Activated CD4-positive, alpha-beta T cell treated with anti-CD3 and anti-CD28 coated beads for 36 hours (primary cell): ENCODE measurements at regions of chr3 and their contacts with region 1.

Region 1: GRCh38 chr3:195909644-195910508 is 1.5 kb upstream of the TNK2 start:
- DNase-seq: peak; percentile 94
- ATAC-seq: peak; percentile 67
- H3K4me3 Mint-ChIP-seq: peak overlapping the region; percentile 68
- H3K27ac Mint-ChIP-seq: peak overlapping the region; percentile 65
- H3K4me1 Mint-ChIP-seq: peaks cover 38% of the 10 kb centered on the region
- H3K27me3 Mint-ChIP-seq: no peaks in the 10 kb centered on the region

Region 2: GRCh38 chr3:195442573-195443390 is 467.1 kb before region 1 on chr3 and contains the start of gene ACAP2:
- CTCF ChIA-PET with region 1: no interaction called
- POLR2A ChIA-PET with region 1: no interaction called
- intact Hi-C with region 1: loop called in 1 of 2 experiments (anchors 2 kb)
- DNase-seq: peak; percentile 99
- ATAC-seq: peak; percentile 96
- H3K4me3 Mint-ChIP-seq: peak within 1 kb of the TSS; percentile 96
- H3K27ac Mint-ChIP-seq: peak within 1 kb of the TSS; percentile 91
- H3K4me1 Mint-ChIP-seq: peaks cover 44% of the 10 kb centered on the region
- H3K27me3 Mint-ChIP-seq: no peaks in the 10 kb centered on the region
- total RNA-seq, gene ACAP2: 43.7 to 51.9 TPM

Region 3: GRCh38 chr3:195863121-195864006 is 46.5 kb before region 1 on chr3:
- CTCF ChIA-PET with region 1: interaction called, 74 read pairs
- POLR2A ChIA-PET with region 1: no interaction called
- intact Hi-C with region 1: loop called (anchors 1 kb)
- DNase-seq: peak; percentile 88
- ATAC-seq: peak; percentile 88
- H3K4me3 Mint-ChIP-seq: no peak overlapping the region
- H3K27ac Mint-ChIP-seq: no peak overlapping the region
- H3K4me1 Mint-ChIP-seq: peaks cover 10% of the 10 kb centered on the region
- H3K27me3 Mint-ChIP-seq: no peaks in the 10 kb centered on the region

Region 4: DNA sequence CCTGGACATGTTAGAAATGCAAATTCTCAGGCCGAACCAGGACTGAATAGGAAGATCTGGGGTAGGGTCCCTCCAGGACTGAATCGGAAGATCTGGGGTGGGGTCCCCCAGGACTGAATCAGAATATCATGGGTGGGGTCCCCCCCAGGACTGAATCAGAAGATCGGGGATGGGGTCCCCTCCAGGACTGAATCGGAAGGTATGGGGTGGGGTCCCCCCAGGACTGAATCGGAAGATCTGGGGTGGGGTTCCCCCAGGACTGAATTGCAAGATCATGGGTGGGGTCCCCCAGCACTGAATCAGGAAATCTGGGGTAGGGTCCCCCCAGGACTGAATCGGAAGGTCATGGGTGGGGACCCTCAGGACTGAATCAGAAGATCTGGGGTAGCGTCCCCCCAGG is 46.7 kb after region 1 on chr3:
- CTCF ChIA-PET with region 1: no interaction called
- POLR2A ChIA-PET with region 1: no interaction called
- intact Hi-C with region 1: loop called in 1 of 2 experiments (anchors 2 kb)
- DNase-seq: no peak
- ATAC-seq: no peak
- H3K4me3 Mint-ChIP-seq: no peak overlapping the region
- H3K27ac Mint-ChIP-seq: peak overlapping the region; percentile 60
- H3K4me1 Mint-ChIP-seq: peaks cover 26% of the 10 kb centered on the region
- H3K27me3 Mint-ChIP-seq: no peaks in the 10 kb centered on the region

Region 5: GRCh38 chr3:196179380-196180308 is 269.8 kb after region 1 on chr3:
- CTCF ChIA-PET with region 1: no interaction called
- POLR2A ChIA-PET with region 1: no interaction called
- intact Hi-C with region 1: loop called in 1 of 2 experiments (anchors 1 kb)
- DNase-seq: peak; percentile 91
- ATAC-seq: peak; percentile 85
- H3K4me3 Mint-ChIP-seq: peak overlapping the region; percentile 37
- H3K27ac Mint-ChIP-seq: peak overlapping the region; percentile 95
- H3K4me1 Mint-ChIP-seq: peaks cover 54% of the 10 kb centered on the region
- H3K27me3 Mint-ChIP-seq: no peaks in the 10 kb centered on the region

Region 6: DNA sequence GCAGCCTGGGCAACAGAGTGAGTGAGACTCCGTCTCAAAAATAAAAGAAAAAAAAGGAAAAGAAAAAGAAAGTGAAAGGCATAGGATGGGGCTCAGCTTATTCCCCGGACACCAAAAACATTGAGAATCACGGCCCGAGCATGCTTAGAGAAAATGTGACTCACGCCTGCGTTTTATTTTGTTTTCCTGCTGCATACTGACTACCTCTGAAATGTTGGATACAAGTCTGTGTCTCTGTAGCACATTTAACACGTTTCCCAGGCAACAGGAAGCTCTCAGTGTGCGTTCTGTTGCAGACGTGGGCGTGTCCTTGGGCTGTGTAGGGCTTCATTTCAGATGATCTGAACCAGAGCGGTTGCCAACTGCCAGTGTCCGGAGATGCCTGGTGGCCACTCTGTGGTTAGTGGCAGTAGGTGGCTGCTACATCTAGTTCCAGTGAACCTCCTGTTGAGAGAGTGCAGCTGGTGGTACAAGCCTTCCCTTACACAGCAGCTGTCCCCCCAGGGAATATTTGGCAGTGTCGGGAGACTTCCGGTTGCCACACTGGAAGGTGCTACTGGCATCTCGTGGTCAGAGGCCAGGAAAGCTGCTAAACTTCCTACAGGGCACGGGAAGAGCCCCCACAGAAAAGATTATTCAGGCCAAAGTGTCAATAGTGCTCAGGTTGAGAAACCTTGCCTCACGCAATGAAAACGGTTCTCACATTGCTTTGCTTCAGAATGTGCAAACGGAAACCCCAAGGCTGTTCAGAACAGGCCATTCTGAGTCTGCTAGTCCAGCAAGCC is 309.5 kb after region 1 on chr3:
- CTCF ChIA-PET with region 1: no interaction called
- POLR2A ChIA-PET with region 1: no interaction called
- intact Hi-C with region 1: no loop called
- DNase-seq: peak; percentile 81
- ATAC-seq: peak; percentile 95
- H3K4me3 Mint-ChIP-seq: peak overlapping the region; percentile 69
- H3K27ac Mint-ChIP-seq: peak overlapping the region; percentile 80
- H3K4me1 Mint-ChIP-seq: peaks cover 12% of the 10 kb centered on the region
- H3K27me3 Mint-ChIP-seq: peaks cover 3% of the 10 kb centered on the region

Region 7: GRCh38 chr3:196317687-196318467 is 408.0 kb after region 1 on chr3 and contains the start of gene DYNLT2B:
- CTCF ChIA-PET with region 1: no interaction called
- POLR2A ChIA-PET with region 1: no interaction called
- intact Hi-C with region 1: loop called in 1 of 2 experiments (anchors 2 kb)
- DNase-seq: peak; percentile 93
- ATAC-seq: peak; percentile 92
- H3K4me3 Mint-ChIP-seq: peak within 1 kb of the TSS; percentile 91
- H3K27ac Mint-ChIP-seq: peak within 1 kb of the TSS; percentile 95
- H3K4me1 Mint-ChIP-seq: peaks cover 12% of the 10 kb centered on the region
- H3K27me3 Mint-ChIP-seq: no peaks in the 10 kb centered on the region
- total RNA-seq, gene DYNLT2B: 7.3 to 16.3 TPM